Natural killer cell (primary cell): ENCODE measurements at regions of chr17 and their contacts with region 1.

Region 1: DNA sequence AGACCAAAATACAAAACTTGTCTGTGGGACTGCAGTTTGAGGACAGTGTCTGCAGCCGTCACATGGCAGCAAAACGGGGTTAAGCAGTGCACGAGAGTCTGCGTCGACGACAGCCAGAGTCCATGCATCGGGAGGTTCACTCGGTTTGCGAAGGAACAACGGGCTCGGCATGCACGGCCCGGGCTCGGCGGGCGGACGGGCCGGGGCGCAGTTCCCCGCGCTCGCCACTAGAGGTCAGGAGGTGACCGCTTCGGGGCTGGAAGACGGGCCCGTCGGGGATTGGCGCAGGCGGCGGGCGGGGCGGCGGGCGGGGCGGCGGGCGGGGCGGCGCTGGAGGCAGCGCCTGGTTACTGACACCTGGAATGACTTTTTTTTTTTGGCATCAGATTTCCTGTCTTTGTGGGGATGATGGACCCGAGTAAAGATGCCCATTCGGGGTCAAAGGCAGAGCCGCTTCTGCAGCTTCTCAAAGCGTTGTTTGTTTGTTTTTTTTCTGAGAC is 6.5 kb downstream of the SCGB1C2 start:
- DNase-seq: peak; percentile 80 to 85
- ATAC-seq: peak; percentile 96 to 100 (median 99)
- H3K4me3 ChIP-seq: no peak overlapping the region
- H3K4me3 Mint-ChIP-seq: no peak overlapping the region
- H3K27ac ChIP-seq: no peak overlapping the region
- H3K27ac Mint-ChIP-seq: no peak overlapping the region
- H3K4me1 ChIP-seq: peaks cover 8% of the 10 kb centered on the region
- H3K4me1 Mint-ChIP-seq: no peaks in the 10 kb centered on the region
- H3K27me3 ChIP-seq: no peaks in the 10 kb centered on the region
- H3K27me3 Mint-ChIP-seq: peaks cover 0 to 11% of the 10 kb centered on the region in 2 donors
- CTCF ChIP-seq: peak; percentile 80

Region 2: DNA sequence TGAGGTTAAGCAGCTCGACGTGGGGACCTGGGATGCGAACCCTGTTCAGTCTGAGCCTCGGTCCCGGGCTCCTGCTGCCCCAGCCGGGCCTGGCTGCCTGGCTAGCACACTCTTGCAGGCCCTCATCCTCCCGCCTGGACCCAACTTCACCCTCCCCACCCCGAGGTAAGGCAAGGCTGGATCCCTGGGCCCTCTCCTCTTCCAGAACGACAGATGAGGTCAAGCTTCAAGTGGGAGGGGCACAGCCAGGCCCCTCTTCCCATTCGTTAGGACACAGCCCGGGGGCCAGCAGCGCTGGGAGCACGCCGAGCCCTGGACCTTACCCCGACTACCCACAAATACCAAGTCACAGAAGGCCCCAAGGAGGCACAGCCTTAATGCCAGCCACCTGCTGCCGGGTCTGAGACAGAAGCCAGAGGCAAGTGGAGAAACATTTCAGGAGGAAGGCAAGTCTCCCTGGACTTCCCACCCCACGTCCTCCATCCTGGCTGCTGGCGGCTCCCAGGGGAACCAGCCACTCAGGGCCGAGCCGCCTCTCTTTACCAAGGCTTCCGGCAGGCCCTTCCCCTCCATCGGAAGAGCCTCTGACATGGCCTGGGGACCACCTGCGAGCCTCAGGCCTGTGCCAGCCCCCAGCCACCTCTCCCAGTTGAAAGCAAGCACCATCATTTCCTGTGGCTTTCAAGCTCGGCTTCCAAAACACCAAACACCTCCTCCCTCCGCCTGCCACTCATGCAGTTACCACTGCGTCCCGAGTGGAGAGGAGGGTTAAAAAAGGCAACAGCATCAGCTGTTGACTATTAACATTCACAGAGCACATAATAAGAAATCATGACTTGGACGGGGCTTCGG is 148.9 kb after region 1 on chr17:
- intact Hi-C with region 1: no loop called
- DNase-seq: peak in 1 of 2 donors; percentile 20
- ATAC-seq: peak; percentile 55 to 82 (median 60)
- H3K4me3 ChIP-seq: no peak overlapping the region
- H3K4me3 Mint-ChIP-seq: peak overlapping the region; percentile 67
- H3K27ac ChIP-seq: no peak overlapping the region
- H3K27ac Mint-ChIP-seq: peak overlapping the region; percentile 72 to 73
- H3K4me1 ChIP-seq: peaks cover 20% of the 10 kb centered on the region
- H3K4me1 Mint-ChIP-seq: peaks cover 23 to 25% of the 10 kb centered on the region in 2 donors
- H3K27me3 ChIP-seq: no peaks in the 10 kb centered on the region
- H3K27me3 Mint-ChIP-seq: peaks cover 0 to 9% of the 10 kb centered on the region in 2 donors
- CTCF ChIP-seq: no peak

Region 3: GRCh38 chr17:385926-386876 is 242.4 kb after region 1 on chr17:
- intact Hi-C with region 1: loop called (anchors 5 kb)
- DNase-seq: peak; percentile 53 to 73
- ATAC-seq: peak; percentile 81 to 89 (median 81)
- H3K4me3 ChIP-seq: no peak overlapping the region
- H3K4me3 Mint-ChIP-seq: peak overlapping the region; percentile 91
- H3K27ac ChIP-seq: no peak overlapping the region
- H3K27ac Mint-ChIP-seq: peak overlapping the region in 1 of 2 donors; percentile 73
- H3K4me1 ChIP-seq: peaks cover 12% of the 10 kb centered on the region
- H3K4me1 Mint-ChIP-seq: peaks cover 21 to 31% of the 10 kb centered on the region in 2 donors
- H3K27me3 ChIP-seq: peaks cover 7% of the 10 kb centered on the region
- H3K27me3 Mint-ChIP-seq: peaks cover 8 to 19% of the 10 kb centered on the region in 2 donors
- CTCF ChIP-seq: peak; percentile 28

Region 4: DNA sequence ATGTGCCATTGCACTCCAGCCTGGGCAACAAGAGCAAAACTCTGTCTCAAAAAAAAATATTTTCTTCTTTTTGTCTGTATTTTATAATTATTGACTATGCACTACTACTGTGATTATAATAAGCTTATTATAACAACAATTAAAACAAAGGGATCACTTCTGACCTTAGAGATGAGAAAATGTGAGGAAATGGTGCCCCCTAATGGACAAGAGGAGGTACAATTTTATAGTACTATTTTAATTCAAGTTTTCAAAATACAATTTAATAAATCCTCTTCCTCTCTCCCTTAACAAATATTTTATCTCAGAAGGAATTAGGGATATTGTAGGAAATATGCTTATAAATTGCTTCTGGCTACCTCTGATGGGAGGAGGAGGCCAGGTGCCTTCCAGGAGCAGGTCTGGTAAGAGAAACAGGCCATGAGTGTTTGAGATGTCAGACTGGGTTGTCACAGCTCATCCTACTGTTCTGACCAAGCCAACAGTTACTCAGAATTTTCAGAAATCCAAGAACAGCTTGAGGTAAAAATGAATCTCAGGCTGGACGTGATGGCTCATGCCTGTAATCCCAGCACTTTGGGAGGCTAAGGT is 556.8 kb after region 1 on chr17:
- intact Hi-C with region 1: loop called (anchors 5 kb)
- DNase-seq: peak in 1 of 2 donors; percentile 76
- ATAC-seq: peak; percentile 61 to 78 (median 73)
- H3K4me3 ChIP-seq: no peak overlapping the region
- H3K4me3 Mint-ChIP-seq: no peak overlapping the region
- H3K27ac ChIP-seq: no peak overlapping the region
- H3K27ac Mint-ChIP-seq: no peak overlapping the region
- H3K4me1 ChIP-seq: no peaks in the 10 kb centered on the region
- H3K4me1 Mint-ChIP-seq: peaks cover 13% of the 10 kb centered on the region in 2 donors
- H3K27me3 ChIP-seq: no peaks in the 10 kb centered on the region
- H3K27me3 Mint-ChIP-seq: no peaks in the 10 kb centered on the region
- CTCF ChIP-seq: peak; percentile 86

Region 5: GRCh38 chr17:1055751-1056645 is 912.2 kb after region 1 on chr17:
- intact Hi-C with region 1: loop called (anchors 5 kb)
- DNase-seq: peak in 1 of 2 donors; percentile 58
- ATAC-seq: peak; percentile 50 to 77 (median 69)
- H3K4me3 ChIP-seq: no peak overlapping the region
- H3K4me3 Mint-ChIP-seq: no peak overlapping the region
- H3K27ac ChIP-seq: no peak overlapping the region
- H3K27ac Mint-ChIP-seq: no peak overlapping the region
- H3K4me1 ChIP-seq: peaks cover 1% of the 10 kb centered on the region
- H3K4me1 Mint-ChIP-seq: peaks cover 5 to 8% of the 10 kb centered on the region in 2 donors
- H3K27me3 ChIP-seq: no peaks in the 10 kb centered on the region
- H3K27me3 Mint-ChIP-seq: no peaks in the 10 kb centered on the region
- CTCF ChIP-seq: peak; percentile 60